ENCODE measurements at regions of chrX and their contacts with region 1.

Region 1: DNA sequence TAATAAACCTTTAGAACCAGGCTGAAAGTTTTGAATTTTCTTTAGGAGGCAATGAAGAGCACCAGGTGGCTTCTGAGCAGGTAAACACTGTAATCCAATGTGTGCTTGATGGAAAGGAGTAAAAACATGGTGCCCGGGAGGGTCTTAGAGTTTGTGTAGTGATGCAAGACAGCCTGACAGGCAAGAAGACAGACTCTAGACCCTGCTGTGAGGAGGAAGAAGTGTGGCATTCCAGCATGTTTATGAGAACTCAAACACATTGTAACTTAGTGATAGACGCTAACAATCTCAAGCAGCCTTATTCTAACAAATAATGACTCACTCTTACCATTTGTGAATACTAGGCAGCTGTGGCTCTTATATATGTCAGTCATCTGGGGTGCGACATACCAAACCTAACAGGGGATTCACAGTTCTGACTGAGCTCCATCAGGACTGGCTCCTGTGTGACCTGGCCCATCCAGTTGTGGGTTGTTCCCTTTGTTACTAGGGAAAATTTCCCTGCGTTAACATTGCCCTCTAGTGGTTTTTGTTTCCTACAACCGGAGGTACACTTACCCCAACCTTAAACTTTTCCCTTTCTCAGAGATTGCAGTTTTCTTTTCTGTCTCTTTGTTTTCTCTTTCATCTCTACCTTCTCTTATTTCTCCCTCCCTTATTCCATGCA is 53.8 kb downstream of the VSIG4 start:
- DNase-seq: peak in 2 of 3 donors; percentile 17 to 35
- ATAC-seq: peak; percentile 87 to 91
- H3K4me3 ChIP-seq: no peak overlapping the region
- H3K27ac ChIP-seq: no peak overlapping the region
- H3K4me1 ChIP-seq: no peaks in the 10 kb centered on the region
- H3K27me3 ChIP-seq: no peaks in the 10 kb centered on the region

Region 2: GRCh38 chrX:65581661-65582339 is 404.3 kb before region 1 on chrX:
- intact Hi-C with region 1: loop called (anchors 2 to 5 kb)
- DNase-seq: peak; percentile 32 to 69 (median 52)
- ATAC-seq: peak; percentile 77 to 93
- H3K4me3 ChIP-seq: no peak overlapping the region
- H3K27ac ChIP-seq: no peak overlapping the region
- H3K4me1 ChIP-seq: no peaks in the 10 kb centered on the region
- H3K27me3 ChIP-seq: no peaks in the 10 kb centered on the region